Activated CD4-positive, alpha-beta T cell treated with anti-CD3 and anti-CD28 coated beads, Interleukin-2, amount 10 ng/mL, durations not matched to agents 24 days and 14 days (primary cell): ENCODE measurements at regions of chr1 and their contacts with region 1.

Region 1: GRCh38 chr1:193417945-193418744 is 231.7 kb upstream of the B3GALT2 start:
- DNase-seq: peak; percentile 73
- H3K4me3 Mint-ChIP-seq: peak overlapping the region; percentile 76
- H3K27ac Mint-ChIP-seq: peak overlapping the region; percentile 67
- H3K4me1 Mint-ChIP-seq: peaks cover 38% of the 10 kb centered on the region
- H3K27me3 Mint-ChIP-seq: no peaks in the 10 kb centered on the region

Region 2: DNA sequence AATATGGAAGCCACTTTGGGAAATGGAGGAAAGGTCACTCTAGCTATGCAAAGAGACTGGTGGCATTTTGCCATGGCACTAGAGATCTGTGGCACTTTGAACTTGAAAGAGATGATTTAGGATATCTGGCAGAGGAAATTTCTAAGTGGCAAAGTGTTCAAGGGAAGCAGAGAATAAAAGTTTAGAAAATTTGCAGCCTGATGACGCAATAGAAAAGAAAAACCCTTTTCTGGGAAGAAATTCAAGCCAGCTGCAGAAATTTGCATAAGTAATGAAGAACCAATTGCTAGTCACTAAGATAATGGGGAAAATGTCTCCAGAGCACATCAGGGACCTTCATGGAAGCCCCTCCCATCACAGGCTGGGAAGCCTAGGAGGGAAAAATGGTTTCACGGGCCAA is 40.7 kb before region 1 on chr1:
- intact Hi-C with region 1: no loop called
- DNase-seq: no peak
- H3K4me3 Mint-ChIP-seq: no peak overlapping the region
- H3K27ac Mint-ChIP-seq: no peak overlapping the region
- H3K4me1 Mint-ChIP-seq: no peaks in the 10 kb centered on the region
- H3K27me3 Mint-ChIP-seq: peaks cover 5% of the 10 kb centered on the region

Region 3: GRCh38 chr1:193392686-193393085 is 25.5 kb before region 1 on chr1:
- intact Hi-C with region 1: no loop called
- DNase-seq: no peak
- H3K4me3 Mint-ChIP-seq: no peak overlapping the region
- H3K27ac Mint-ChIP-seq: no peak overlapping the region
- H3K4me1 Mint-ChIP-seq: peaks cover 7% of the 10 kb centered on the region
- H3K27me3 Mint-ChIP-seq: no peaks in the 10 kb centered on the region

Region 4: GRCh38 chr1:193437785-193438184 is 19.6 kb after region 1 on chr1:
- intact Hi-C with region 1: loop called (anchors 2 kb)
- DNase-seq: peak; percentile 79
- H3K4me3 Mint-ChIP-seq: peak overlapping the region; percentile 48
- H3K27ac Mint-ChIP-seq: peak overlapping the region; percentile 81
- H3K4me1 Mint-ChIP-seq: peaks cover 29% of the 10 kb centered on the region
- H3K27me3 Mint-ChIP-seq: no peaks in the 10 kb centered on the region

Region 5: GRCh38 chr1:193456811-193457280 is 38.7 kb after region 1 on chr1:
- intact Hi-C with region 1: loop called (anchors 2 kb)
- DNase-seq: no peak
- H3K4me3 Mint-ChIP-seq: no peak overlapping the region
- H3K27ac Mint-ChIP-seq: no peak overlapping the region
- H3K4me1 Mint-ChIP-seq: peaks cover 16% of the 10 kb centered on the region
- H3K27me3 Mint-ChIP-seq: no peaks in the 10 kb centered on the region

Region 6: DNA sequence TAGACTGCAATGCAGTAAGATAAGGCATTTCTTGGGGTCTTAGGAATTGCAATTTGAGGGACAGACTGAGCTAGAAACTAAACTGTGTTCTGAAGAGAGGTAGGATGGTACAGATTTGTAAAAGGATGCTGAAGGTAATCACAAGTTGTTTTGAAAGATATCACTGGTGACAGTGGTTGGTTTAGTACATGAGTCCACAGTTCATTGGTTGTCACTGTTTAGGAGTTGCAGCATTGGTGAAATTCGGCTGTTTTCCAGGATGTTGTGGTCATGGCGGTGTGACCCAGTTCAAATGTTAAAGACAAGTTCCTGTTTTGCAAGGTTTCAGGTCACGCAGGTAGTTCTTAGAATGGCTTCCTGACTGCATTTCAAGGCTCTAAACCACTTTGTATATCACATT is 61.0 kb after region 1 on chr1:
- intact Hi-C with region 1: loop called (anchors 5 kb)
- DNase-seq: peak; percentile 95
- H3K4me3 Mint-ChIP-seq: peak overlapping the region; percentile 70
- H3K27ac Mint-ChIP-seq: peak overlapping the region; percentile 95
- H3K4me1 Mint-ChIP-seq: peaks cover 62% of the 10 kb centered on the region
- H3K27me3 Mint-ChIP-seq: no peaks in the 10 kb centered on the region